Activated T-helper 1 cell treated with anti-CD3 and anti-CD28 coated beads, Interleukin-12 subunit alpha, Interleukin-12 subunit beta, Interleukin-2, Interleukin-4 antibody, amounts not matched to agents 30 ng/mL and 10 ng/mL and 1 ng/mL, durations not matched to agents 14 hours and 24 hours and 36 hours (primary cell): ENCODE measurements at regions of chrX and their contacts with region 1.

Region 1: DNA sequence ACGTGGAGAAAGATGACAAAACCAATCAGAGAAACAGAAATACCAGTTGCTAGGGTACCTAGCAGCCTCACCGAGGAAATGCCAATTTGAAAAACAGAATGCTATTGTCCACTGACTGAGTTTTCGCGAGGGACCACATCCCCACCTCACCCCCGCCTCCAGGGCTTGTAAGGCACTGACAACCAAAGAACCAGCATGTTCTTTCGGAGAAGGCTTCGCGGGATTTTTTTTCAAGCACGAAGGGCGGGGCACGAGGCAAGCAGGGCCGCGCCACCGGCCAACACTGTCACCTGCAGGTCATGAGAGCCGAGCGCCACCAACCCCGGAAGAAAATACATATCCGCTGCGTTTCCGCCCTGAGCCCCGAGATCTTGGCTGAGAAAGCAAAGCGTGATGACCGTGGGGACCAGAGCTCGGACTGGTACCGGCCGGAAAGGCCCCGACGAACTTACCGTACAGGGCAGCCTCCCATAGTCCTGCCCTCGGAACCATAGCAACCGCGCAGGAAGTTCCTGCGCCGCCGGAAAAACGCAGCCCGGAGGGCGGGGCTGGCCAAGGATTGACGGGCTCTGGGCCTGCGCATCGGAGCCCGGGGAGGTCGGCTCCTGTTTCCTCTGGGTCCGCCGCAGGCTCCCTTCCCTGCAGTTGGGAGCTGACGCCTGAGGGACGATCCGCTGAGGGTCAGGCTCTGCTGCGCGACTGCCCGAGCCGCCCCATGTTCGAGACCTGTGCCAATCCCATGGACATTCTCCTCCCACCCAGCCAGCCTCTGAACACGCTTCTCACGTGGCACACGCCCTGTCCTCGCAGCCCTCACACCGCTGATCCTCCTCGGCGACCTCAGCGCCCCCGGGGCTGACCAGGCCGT is 59.2 kb upstream of the PAGE5 start:
- DNase-seq: peak; percentile 83
- H3K4me3 Mint-ChIP-seq: peak overlapping the region; percentile 88
- H3K27ac Mint-ChIP-seq: peak overlapping the region; percentile 96
- H3K4me1 Mint-ChIP-seq: peaks cover 9% of the 10 kb centered on the region
- H3K27me3 Mint-ChIP-seq: peaks cover 8% of the 10 kb centered on the region

Region 2: DNA sequence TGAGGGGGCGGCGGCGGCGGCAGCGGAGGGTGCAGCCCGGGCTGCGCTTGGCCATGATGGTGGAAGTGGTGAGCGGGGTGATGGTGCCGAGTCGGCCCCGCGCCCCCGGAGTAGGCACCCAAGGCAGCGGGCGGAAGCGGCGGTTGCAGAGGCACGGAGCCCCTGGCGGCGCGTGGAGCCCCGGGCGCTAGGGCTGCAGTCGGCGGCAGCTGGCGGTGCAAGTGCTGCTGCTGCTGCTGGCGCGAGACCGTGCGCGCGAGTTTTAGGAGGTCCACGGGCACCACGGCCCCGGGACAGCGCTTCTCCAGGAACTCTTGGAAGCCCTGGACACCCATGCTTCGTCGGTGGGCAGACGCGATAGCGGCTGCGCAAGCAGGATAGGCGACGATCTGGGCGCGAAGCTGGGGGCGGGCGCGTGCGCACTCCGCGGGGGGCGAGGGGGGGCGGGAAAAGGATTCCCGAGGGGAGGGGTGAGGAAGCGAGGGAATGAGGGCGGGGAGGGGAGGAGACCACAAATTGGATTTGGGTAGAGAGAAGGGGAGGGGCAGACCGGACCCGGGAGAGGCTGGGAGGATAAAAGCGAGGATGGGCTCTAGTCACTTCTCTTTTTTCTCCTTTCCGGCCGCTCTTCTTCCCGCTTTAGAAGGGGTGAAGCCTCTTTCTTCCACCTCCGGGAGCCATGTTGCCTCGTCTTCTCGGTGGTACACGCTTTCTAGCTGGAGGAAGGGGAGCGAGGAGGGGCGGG is 977.9 kb before region 1 on chrX and contains the start of gene FAM120C:
- intact Hi-C with region 1: loop called (anchors 2 kb)
- DNase-seq: peak; percentile 38
- H3K4me3 Mint-ChIP-seq: peak within 1 kb of the TSS; percentile 90
- H3K27ac Mint-ChIP-seq: peak within 1 kb of the TSS; percentile 91
- H3K4me1 Mint-ChIP-seq: peaks cover 40% of the 10 kb centered on the region
- H3K27me3 Mint-ChIP-seq: no peaks in the 10 kb centered on the region
- total RNA-seq, gene FAM120C: 10.4 and 11.8 TPM in 2 replicates

Region 3: GRCh38 chrX:54639346-54640102 is 521.4 kb before region 1 on chrX:
- intact Hi-C with region 1: loop called (anchors 1 kb)
- DNase-seq: peak; percentile 87
- H3K4me3 Mint-ChIP-seq: peak overlapping the region; percentile 93
- H3K27ac Mint-ChIP-seq: peak overlapping the region; percentile 99
- H3K4me1 Mint-ChIP-seq: peaks cover 10% of the 10 kb centered on the region
- H3K27me3 Mint-ChIP-seq: no peaks in the 10 kb centered on the region

Region 4: GRCh38 chrX:54999717-55000598 is 161.0 kb before region 1 on chrX and contains the start of gene APEX2:
- intact Hi-C with region 1: loop called (anchors 1 kb)
- DNase-seq: peak; percentile 84
- H3K4me3 Mint-ChIP-seq: peak within 1 kb of the TSS; percentile 96
- H3K27ac Mint-ChIP-seq: peak within 1 kb of the TSS; percentile 91
- H3K4me1 Mint-ChIP-seq: peaks cover 10% of the 10 kb centered on the region
- H3K27me3 Mint-ChIP-seq: no peaks in the 10 kb centered on the region
- total RNA-seq, gene APEX2: 33.9 and 36.8 TPM in 2 replicates

Region 5: DNA sequence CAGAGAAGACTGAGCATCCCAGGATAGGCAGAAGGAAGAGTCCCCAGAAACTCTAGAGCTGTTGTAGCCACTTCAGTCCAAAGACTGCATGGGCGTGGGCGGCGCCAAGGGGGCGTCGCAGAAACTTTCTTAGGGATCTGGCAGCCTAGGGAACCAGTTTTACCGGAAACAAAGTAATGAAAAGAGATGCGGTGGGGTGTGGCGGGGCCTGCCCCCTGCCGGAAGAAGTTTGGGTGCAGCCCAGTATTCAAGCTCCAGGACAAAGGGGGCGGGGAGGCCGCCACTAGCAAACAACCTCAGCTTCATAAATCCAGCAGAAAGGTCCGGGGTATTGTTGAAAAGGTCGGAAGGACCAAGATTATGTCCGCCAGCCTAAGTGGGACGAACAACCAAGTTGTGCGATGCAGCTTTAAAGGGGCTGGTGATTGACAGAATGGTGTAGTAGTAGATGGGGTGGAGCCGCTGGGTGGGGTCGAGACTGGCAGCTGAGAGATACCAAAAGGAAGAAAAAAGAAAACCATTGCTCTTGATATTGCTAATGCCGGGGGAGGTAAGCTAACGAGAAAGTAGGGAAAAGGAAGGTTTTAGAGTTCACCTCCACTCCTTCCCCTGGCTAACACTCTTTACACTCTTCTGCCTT is 747.2 kb after region 1 on chrX:
- intact Hi-C with region 1: loop called (anchors 1 kb)
- DNase-seq: peak; percentile 33
- H3K4me3 Mint-ChIP-seq: peak overlapping the region; percentile 85
- H3K27ac Mint-ChIP-seq: peak overlapping the region; percentile 92
- H3K4me1 Mint-ChIP-seq: peaks cover 31% of the 10 kb centered on the region
- H3K27me3 Mint-ChIP-seq: no peaks in the 10 kb centered on the region